Mammary epithelial cell (primary cell): ENCODE measurements at regions of chrX and their contacts with region 1.

Region 1: GRCh38 chrX:141176586-141177451 is at the start of gene LDOC1:
- DNase-seq: peak; percentile 72
- H3K4me3 ChIP-seq: peak within 1 kb of the TSS; percentile 48 to 76 (median 68)
- H3K27ac ChIP-seq: peak within 1 kb of the TSS; percentile 45
- H3K4me1 ChIP-seq: no peaks in the 10 kb centered on the region
- H3K27me3 ChIP-seq: no peaks in the 10 kb centered on the region
- CTCF ChIP-seq: no peak
- total RNA-seq, gene LDOC1: 4.8 to 49.7 TPM

Region 2: GRCh38 chrX:141220344-141221035 is 43.7 kb after region 1 on chrX:
- CTCF ChIA-PET with region 1: no interaction called
- dilution Hi-C with region 1: no loop called
- in situ Hi-C with region 1: no loop called
- intact Hi-C with region 1: loop called (anchors 5 kb)
- DNase-seq: peak; percentile 78
- H3K4me3 ChIP-seq: no peak overlapping the region
- H3K27ac ChIP-seq: peak overlapping the region; percentile 29
- H3K4me1 ChIP-seq: peaks cover 22% of the 10 kb centered on the region
- H3K27me3 ChIP-seq: no peaks in the 10 kb centered on the region
- CTCF ChIP-seq: no peak